Natural killer cell (primary cell): ENCODE measurements at regions of chr3 and their contacts with region 1.

Region 1: DNA sequence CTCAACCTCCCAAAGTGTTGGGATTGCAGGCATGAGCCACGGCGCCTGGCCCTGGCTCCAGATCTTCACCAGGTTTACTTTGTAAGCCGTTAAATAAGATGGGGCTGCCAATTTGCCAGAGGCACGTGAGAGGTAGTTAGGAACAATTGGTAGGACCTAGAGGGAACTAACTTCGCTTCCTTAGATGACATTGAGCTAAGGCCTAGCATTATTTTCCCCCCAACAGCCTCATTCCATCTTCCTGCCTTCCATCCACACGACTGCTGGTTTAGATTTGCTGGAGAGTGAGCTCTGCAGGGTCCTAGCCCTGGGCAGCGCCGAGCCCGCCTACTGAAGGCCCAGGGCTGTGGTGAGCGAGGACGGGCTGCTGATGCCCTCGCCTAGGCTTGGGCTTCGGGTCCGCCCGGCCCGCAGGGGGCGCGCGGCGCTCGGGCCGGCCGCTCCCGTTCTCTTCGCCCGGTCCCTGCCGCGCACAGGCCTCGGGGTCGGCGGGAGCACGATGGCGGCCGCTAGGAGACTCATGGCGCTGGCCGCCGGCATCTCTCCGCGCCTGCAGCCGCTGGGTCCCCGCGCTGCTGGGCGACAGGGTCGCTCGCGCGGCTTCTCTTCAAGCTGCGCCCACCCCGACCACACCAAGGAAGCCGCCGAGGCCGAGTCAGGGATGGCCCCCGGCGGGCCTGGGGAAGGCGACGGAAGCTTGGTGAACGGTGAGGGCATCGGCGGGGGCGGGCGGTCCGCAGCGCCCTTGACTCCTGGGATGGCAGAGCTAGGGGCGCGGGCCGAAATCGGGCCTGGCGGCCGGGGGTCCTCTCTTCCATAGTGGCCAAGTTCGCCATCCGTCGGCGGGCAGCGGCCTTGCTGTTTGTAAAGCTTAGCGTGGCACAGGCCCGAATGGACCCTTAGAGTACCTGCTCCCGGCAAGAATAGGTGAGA is 21.9 kb downstream of the DHX30 start:
- DNase-seq: peak; percentile 80 to 91
- ATAC-seq: peak; percentile 98 to 99 (median 99)
- H3K4me3 ChIP-seq: peak overlapping the region; percentile 90
- H3K4me3 Mint-ChIP-seq: peak overlapping the region; percentile 89
- H3K27ac ChIP-seq: peak overlapping the region; percentile 52
- H3K27ac Mint-ChIP-seq: peak overlapping the region; percentile 58 to 90
- H3K4me1 ChIP-seq: peaks cover 19% of the 10 kb centered on the region
- H3K4me1 Mint-ChIP-seq: peaks cover 18 to 24% of the 10 kb centered on the region in 2 donors
- H3K27me3 ChIP-seq: no peaks in the 10 kb centered on the region
- H3K27me3 Mint-ChIP-seq: no peaks in the 10 kb centered on the region
- CTCF ChIP-seq: peak; percentile 88

Region 2: GRCh38 chr3:47522082-47522987 is 302.5 kb before region 1 on chr3:
- intact Hi-C with region 1: loop called (anchors 1 kb)
- DNase-seq: peak; percentile 57 to 87
- ATAC-seq: peak; percentile 85 to 99 (median 98)
- H3K4me3 ChIP-seq: no peak overlapping the region
- H3K4me3 Mint-ChIP-seq: no peak overlapping the region
- H3K27ac ChIP-seq: no peak overlapping the region
- H3K27ac Mint-ChIP-seq: no peak overlapping the region
- H3K4me1 ChIP-seq: peaks cover 6% of the 10 kb centered on the region
- H3K4me1 Mint-ChIP-seq: peaks cover 0 to 8% of the 10 kb centered on the region in 2 donors
- H3K27me3 ChIP-seq: no peaks in the 10 kb centered on the region
- H3K27me3 Mint-ChIP-seq: no peaks in the 10 kb centered on the region
- CTCF ChIP-seq: peak; percentile 89